Mammary epithelial cell (primary cell): ENCODE measurements at regions of chr3 and their contacts with region 1.

Region 1: GRCh38 chr3:49723628-49724551 is at the start of gene GMPPB:
- DNase-seq: peak; percentile 97
- H3K4me3 ChIP-seq: peak within 1 kb of the TSS; percentile 51 to 85 (median 84)
- H3K27ac ChIP-seq: peak within 1 kb of the TSS; percentile 92
- H3K4me1 ChIP-seq: peaks cover 25% of the 10 kb centered on the region
- H3K27me3 ChIP-seq: no peaks in the 10 kb centered on the region
- CTCF ChIP-seq: no peak
- total RNA-seq, gene GMPPB: 19.2 to 38.4 TPM

Region 2: DNA sequence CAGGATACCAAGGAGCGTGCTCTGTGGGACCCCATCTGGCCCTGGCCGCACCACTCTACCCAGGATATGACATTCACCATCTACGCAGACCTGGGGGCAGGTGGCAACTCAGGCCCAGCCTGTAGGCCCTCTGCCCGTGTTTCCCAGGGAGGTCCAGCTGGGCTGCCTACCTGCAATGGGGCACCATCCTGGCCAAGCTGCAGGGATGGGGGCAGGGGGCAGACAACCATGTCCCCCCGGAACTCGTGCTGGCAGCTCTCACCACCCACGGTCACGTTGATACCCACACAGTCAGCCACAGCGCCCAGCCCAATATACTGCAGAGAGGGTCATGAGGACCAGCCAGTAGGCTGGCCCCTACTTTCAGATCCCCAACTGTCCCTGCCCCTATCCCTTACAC is 171.9 kb after region 1 on chr3:
- CTCF ChIA-PET with region 1: no interaction called
- dilution Hi-C with region 1: no loop called
- in situ Hi-C with region 1: no loop called
- intact Hi-C with region 1: no loop called
- DNase-seq: no peak
- H3K4me3 ChIP-seq: no peak overlapping the region
- H3K27ac ChIP-seq: no peak overlapping the region
- H3K4me1 ChIP-seq: peaks cover 27% of the 10 kb centered on the region
- H3K27me3 ChIP-seq: no peaks in the 10 kb centered on the region
- CTCF ChIP-seq: no peak

Region 3: GRCh38 chr3:49906004-49906743 is 182.3 kb after region 1 on chr3:
- CTCF ChIA-PET with region 1: no interaction called
- dilution Hi-C with region 1: no loop called
- in situ Hi-C with region 1: no loop called
- intact Hi-C with region 1: loop called (anchors 5 kb)
- DNase-seq: peak; percentile 60
- H3K4me3 ChIP-seq: peak overlapping the region; percentile 17 to 34 (median 25)
- H3K27ac ChIP-seq: peak overlapping the region; percentile 31
- H3K4me1 ChIP-seq: peaks cover 48% of the 10 kb centered on the region
- H3K27me3 ChIP-seq: no peaks in the 10 kb centered on the region
- CTCF ChIP-seq: peak; percentile 59 to 83

Region 4: DNA sequence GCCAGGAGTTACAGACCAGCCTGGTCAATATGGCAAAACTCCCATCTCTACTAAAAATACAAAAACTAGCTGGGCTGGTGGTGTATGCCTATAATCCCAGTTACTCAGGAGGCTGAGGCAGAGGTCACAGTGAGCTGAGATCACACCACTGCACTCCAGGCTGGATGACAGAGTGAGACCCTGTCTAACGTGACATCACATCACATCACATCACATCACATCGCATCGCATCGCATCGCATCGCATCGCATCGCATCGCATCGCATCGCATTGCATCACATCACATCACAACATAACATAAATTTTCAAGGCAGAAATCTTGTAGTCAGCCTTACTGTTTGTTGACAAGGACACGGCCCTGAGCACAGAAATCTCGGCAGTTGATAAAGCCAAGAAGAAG is 260.5 kb after region 1 on chr3:
- CTCF ChIA-PET with region 1: no interaction called
- dilution Hi-C with region 1: no loop called
- in situ Hi-C with region 1: no loop called
- intact Hi-C with region 1: no loop called
- DNase-seq: no peak
- H3K4me3 ChIP-seq: no peak overlapping the region
- H3K27ac ChIP-seq: no peak overlapping the region
- H3K4me1 ChIP-seq: no peaks in the 10 kb centered on the region
- H3K27me3 ChIP-seq: no peaks in the 10 kb centered on the region
- CTCF ChIP-seq: no peak